GM23248 (cell line): ENCODE measurements at regions of chr2 and their contacts with region 1.

Region 1: DNA sequence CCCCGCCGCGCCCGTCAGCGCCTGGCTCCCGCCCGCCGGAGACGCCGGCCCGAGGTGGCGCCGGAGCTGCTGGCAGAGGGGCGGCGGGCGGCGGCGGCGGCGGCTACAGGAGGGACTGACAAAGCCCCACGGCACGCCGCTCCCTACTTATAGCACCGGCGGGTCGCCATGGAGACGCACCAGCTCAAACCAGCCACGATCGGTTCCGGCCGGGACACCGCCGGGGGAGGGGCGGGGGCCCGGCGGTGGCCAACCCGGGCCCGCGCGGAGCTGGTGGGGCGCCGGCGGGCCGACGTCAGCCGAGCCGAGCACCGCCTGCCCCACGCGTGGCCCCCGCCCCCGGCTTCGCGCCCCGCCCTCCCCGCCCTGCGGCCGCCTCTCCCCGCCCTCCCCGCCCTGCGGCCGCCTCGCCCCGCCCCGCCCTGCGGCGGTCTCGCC is at the start of gene ODC1:
- DNase-seq: peak; percentile 96
- H3K4me3 ChIP-seq: peak within 1 kb of the TSS; percentile 77
- H3K27ac ChIP-seq: peak within 1 kb of the TSS; percentile 90
- H3K4me1 ChIP-seq: peaks cover 15% of the 10 kb centered on the region
- H3K27me3 ChIP-seq: no peaks in the 10 kb centered on the region
- total RNA-seq, gene ODC1: 106 and 114 TPM in 2 replicates

Region 2: DNA sequence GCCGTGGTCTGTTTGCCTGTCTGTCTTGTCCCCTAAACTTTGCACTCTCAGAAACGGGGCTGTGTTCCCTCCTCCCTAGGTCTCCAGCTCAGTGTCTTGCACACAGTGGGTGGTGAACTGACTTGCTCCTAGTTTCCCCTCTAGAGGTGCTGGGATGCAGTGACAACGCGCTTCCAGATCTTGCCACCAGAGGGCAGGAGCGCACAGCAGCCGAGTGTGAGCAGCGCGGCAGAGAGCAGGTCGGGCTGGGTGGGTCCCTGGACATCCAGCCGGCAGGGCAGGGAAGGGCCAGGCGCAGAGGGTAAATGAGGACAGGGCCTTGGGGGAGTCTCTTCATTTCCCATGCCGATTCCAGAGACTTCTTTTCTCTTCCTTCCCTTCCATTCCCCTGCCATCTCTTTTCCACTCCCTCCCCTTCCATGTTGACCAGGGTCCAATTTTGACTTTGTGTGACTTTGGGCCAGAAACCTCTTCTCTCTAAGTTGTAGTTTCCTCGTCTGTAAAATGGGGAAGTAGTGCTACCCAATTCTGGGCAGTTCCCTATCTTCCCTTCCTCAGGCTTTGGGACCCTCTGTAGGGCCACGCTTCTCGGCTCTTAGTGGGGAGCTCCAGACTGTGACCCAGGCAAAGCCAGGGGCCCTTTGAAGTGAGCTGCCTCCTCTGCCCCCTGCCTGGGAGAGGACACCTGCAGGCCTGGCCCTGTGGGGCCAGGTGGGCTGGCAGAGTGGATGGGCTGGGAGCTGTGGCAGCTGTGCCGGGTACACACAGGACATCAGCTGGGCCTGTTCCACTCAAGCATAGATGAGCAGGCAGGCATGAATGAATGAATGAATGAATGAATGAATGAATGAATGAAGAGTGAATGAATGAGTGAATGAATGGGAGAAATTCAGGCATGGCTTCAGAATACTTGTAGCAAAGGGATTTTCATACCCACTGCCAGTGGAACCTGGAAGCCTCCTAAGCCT is 648.3 kb before region 1 on chr2:
- in situ Hi-C with region 1: loop called (anchors 25 kb)
- DNase-seq: peak; percentile 89
- H3K4me3 ChIP-seq: no peak overlapping the region
- H3K27ac ChIP-seq: peak overlapping the region; percentile 96
- H3K4me1 ChIP-seq: peaks cover 38% of the 10 kb centered on the region
- H3K27me3 ChIP-seq: no peaks in the 10 kb centered on the region